ENCODE measurements at regions of chr6 and their contacts with region 1.

Region 1: GRCh38 chr6:30730601-30731435 is 10.7 kb downstream of the TUBB start:
- DNase-seq: peak; percentile 91
- H3K4me3 Mint-ChIP-seq: no peak overlapping the region
- H3K27ac Mint-ChIP-seq: no peak overlapping the region
- H3K4me1 Mint-ChIP-seq: peaks cover 7% of the 10 kb centered on the region
- H3K27me3 Mint-ChIP-seq: no peaks in the 10 kb centered on the region
- CTCF ChIP-seq: peak; percentile 86

Region 2: GRCh38 chr6:30411515-30412207 is 319.2 kb before region 1 on chr6:
- CTCF ChIA-PET with region 1: no interaction called
- POLR2A ChIA-PET with region 1: no interaction called
- intact Hi-C with region 1: no loop called
- DNase-seq: peak; percentile 60
- H3K4me3 Mint-ChIP-seq: no peak overlapping the region
- H3K27ac Mint-ChIP-seq: no peak overlapping the region
- H3K4me1 Mint-ChIP-seq: no peaks in the 10 kb centered on the region
- H3K27me3 Mint-ChIP-seq: peaks cover 88% of the 10 kb centered on the region
- CTCF ChIP-seq: peak; percentile 79

Region 3: GRCh38 chr6:30589754-30590358 is 141.0 kb before region 1 on chr6:
- CTCF ChIA-PET with region 1: no interaction called
- POLR2A ChIA-PET with region 1: no interaction called
- intact Hi-C with region 1: no loop called
- DNase-seq: no peak
- H3K4me3 Mint-ChIP-seq: no peak overlapping the region
- H3K27ac Mint-ChIP-seq: no peak overlapping the region
- H3K4me1 Mint-ChIP-seq: no peaks in the 10 kb centered on the region
- H3K27me3 Mint-ChIP-seq: no peaks in the 10 kb centered on the region
- CTCF ChIP-seq: no peak

Region 4: GRCh38 chr6:30672445-30673253 is 58.2 kb before region 1 on chr6 and contains the start of gene DHX16:
- CTCF ChIA-PET with region 1: interaction called, 537 read pairs
- POLR2A ChIA-PET with region 1: interaction called, 208 read pairs
- intact Hi-C with region 1: no loop called
- DNase-seq: peak; percentile 99
- H3K4me3 Mint-ChIP-seq: peak within 1 kb of the TSS; percentile 83
- H3K27ac Mint-ChIP-seq: peak within 1 kb of the TSS; percentile 52
- H3K4me1 Mint-ChIP-seq: peaks cover 12% of the 10 kb centered on the region
- H3K27me3 Mint-ChIP-seq: no peaks in the 10 kb centered on the region
- CTCF ChIP-seq: peak; percentile 71
- total RNA-seq, gene DHX16: 41.3 and 49.8 TPM in 2 replicates

Region 5: GRCh38 chr6:30678964-30679726 is 51.7 kb before region 1 on chr6:
- CTCF ChIA-PET with region 1: interaction called, 537 read pairs
- POLR2A ChIA-PET with region 1: interaction called, 251 read pairs
- intact Hi-C with region 1: no loop called
- DNase-seq: peak; percentile 82
- H3K4me3 Mint-ChIP-seq: peak overlapping the region; percentile 41
- H3K27ac Mint-ChIP-seq: no peak overlapping the region
- H3K4me1 Mint-ChIP-seq: peaks cover 28% of the 10 kb centered on the region
- H3K27me3 Mint-ChIP-seq: no peaks in the 10 kb centered on the region
- CTCF ChIP-seq: peak; percentile 98

Region 6: DNA sequence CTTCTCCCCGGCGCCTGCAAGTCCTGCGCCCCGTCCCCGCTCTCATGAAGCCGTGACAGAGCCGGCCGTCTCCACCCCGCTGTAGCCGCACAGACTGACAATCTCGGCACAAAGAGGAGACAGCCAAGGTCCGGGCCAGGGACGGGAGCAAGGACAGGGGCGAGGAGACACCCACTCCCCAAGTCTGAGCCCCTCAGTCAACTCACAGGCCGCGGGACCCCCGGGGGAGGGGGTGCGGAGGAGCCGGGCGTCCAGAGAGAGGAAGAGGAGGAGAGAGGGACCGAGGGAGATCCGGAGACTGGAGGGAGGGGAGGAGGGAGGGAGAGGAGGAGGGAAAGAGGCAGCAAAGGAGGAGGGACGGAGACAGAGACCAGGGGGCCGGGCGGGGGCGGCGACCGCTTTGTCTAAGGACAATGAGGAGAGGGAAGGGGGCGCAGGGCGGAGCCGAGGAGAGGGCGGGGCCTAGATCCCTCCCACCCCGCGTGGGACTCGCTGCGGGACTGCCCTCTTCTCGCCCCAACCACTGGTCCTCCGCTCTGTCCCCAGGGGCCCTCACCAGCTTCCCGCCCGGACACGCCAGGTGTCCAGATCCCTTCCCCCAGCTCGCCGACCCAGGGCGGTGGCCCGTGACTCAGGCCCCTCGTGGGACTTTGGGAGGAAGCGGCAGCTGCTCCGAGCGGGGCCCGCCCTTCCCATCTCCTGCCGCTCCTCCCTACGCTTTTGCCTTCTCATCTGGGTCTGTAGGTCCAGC is 43.7 kb before region 1 on chr6:
- CTCF ChIA-PET with region 1: interaction called, 537 read pairs
- POLR2A ChIA-PET with region 1: interaction called, 477 read pairs
- intact Hi-C with region 1: no loop called
- DNase-seq: peak; percentile 96
- H3K4me3 Mint-ChIP-seq: peak overlapping the region; percentile 94
- H3K27ac Mint-ChIP-seq: peak overlapping the region; percentile 80
- H3K4me1 Mint-ChIP-seq: peaks cover 66% of the 10 kb centered on the region
- H3K27me3 Mint-ChIP-seq: no peaks in the 10 kb centered on the region
- CTCF ChIP-seq: no peak

Region 7: GRCh38 chr6:30759575-30760239 is 28.9 kb after region 1 on chr6:
- CTCF ChIA-PET with region 1: no interaction called
- POLR2A ChIA-PET with region 1: no interaction called
- intact Hi-C with region 1: no loop called
- DNase-seq: no peak
- H3K4me3 Mint-ChIP-seq: no peak overlapping the region
- H3K27ac Mint-ChIP-seq: no peak overlapping the region
- H3K4me1 Mint-ChIP-seq: peaks cover 21% of the 10 kb centered on the region
- H3K27me3 Mint-ChIP-seq: no peaks in the 10 kb centered on the region
- CTCF ChIP-seq: no peak

Measured in MCF 10A (cell line).